ENCODE measurements at regions of chr6 and their contacts with region 1.

Region 1: DNA sequence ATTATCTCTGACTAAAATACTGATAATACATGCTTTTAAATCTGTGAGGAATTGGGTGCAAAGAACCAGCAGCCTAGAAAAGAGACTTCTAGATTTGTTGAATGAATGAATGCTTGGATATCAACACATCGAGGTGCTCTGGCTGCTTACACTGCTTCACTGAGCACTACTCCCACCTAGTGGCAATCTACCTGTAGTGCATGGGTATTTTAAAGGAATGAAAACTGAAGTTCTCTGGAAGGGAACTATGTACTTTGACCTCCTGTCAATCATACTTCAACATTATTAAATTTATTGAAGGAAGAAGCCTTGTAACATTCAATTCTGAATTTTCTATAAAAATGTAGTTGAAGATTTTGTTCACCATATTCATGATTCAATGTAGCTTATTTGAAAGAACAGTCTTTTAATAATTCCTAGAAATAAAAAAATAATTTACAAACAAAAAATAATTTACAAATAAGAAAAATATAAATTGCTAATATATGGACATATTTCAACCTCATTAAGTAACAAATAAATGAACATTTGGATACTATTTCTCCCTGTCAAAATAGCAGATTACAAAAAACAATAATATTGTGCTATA is 111.2 kb upstream of the MMS22L start:
- DNase-seq: peak; percentile 10
- H3K4me3 Mint-ChIP-seq: no peak overlapping the region
- H3K27ac Mint-ChIP-seq: no peak overlapping the region
- H3K4me1 Mint-ChIP-seq: no peaks in the 10 kb centered on the region
- H3K27me3 Mint-ChIP-seq: peaks cover 10% of the 10 kb centered on the region

Region 2: GRCh38 chr6:96626759-96627364 is 767.4 kb before region 1 on chr6:
- intact Hi-C with region 1: loop called (anchors 10 kb)
- DNase-seq: no peak
- H3K4me3 Mint-ChIP-seq: no peak overlapping the region
- H3K27ac Mint-ChIP-seq: no peak overlapping the region
- H3K4me1 Mint-ChIP-seq: peaks cover 7% of the 10 kb centered on the region
- H3K27me3 Mint-ChIP-seq: peaks cover 17% of the 10 kb centered on the region

Region 3: GRCh38 chr6:97068211-97068610 is 326.0 kb before region 1 on chr6:
- intact Hi-C with region 1: loop called (anchors 1 kb)
- DNase-seq: no peak
- H3K4me3 Mint-ChIP-seq: no peak overlapping the region
- H3K27ac Mint-ChIP-seq: no peak overlapping the region
- H3K4me1 Mint-ChIP-seq: peaks cover 10% of the 10 kb centered on the region
- H3K27me3 Mint-ChIP-seq: no peaks in the 10 kb centered on the region

Region 4: DNA sequence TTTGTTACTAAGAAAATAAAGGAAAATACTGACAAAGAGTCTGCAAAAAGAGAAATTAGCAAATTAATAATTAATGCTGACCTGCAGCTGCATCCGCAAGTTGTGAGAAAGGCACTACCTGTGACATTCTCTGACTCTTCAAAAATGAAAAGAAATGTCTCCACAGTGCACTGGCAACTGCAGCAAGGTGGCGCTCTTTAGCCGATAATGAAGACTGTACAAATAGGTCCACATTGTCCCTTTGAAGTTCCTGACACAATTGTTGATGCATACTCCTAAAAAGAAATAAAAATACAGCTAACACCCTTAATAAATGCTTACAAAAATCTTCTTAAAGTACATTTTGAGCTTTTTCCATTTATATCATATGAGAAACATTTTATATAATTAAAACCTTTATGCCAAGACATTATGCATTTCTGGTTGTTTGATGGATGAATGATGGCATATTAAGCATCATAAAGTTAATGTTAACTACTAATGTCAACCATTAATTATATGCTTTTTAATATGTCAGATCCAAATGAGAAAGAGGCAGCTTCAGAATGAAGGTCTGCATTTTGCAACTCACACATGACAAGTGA is 207.7 kb before region 1 on chr6:
- intact Hi-C with region 1: loop called (anchors 1 kb)
- DNase-seq: peak; percentile 41
- H3K4me3 Mint-ChIP-seq: no peak overlapping the region
- H3K27ac Mint-ChIP-seq: no peak overlapping the region
- H3K4me1 Mint-ChIP-seq: peaks cover 3% of the 10 kb centered on the region
- H3K27me3 Mint-ChIP-seq: no peaks in the 10 kb centered on the region